Natural killer cell (primary cell): ENCODE measurements at regions of chr11 and their contacts with region 1.

Region 1: GRCh38 chr11:66480117-66480938 is at the start of gene DPP3:
- DNase-seq: peak; percentile 94 to 96
- ATAC-seq: peak; percentile 98 to 99 (median 99)
- H3K4me3 ChIP-seq: peak within 1 kb of the TSS; percentile 89
- H3K4me3 Mint-ChIP-seq: peak within 1 kb of the TSS; percentile 92
- H3K27ac ChIP-seq: peak within 1 kb of the TSS; percentile 82
- H3K27ac Mint-ChIP-seq: peak within 1 kb of the TSS; percentile 87 to 91
- H3K4me1 ChIP-seq: peaks cover 21% of the 10 kb centered on the region
- H3K4me1 Mint-ChIP-seq: peaks cover 13 to 42% of the 10 kb centered on the region in 2 donors
- H3K27me3 ChIP-seq: no peaks in the 10 kb centered on the region
- H3K27me3 Mint-ChIP-seq: no peaks in the 10 kb centered on the region
- CTCF ChIP-seq: no peak
- total RNA-seq, gene DPP3: 37.4 to 42.9 (median 38.6) TPM

Region 2: DNA sequence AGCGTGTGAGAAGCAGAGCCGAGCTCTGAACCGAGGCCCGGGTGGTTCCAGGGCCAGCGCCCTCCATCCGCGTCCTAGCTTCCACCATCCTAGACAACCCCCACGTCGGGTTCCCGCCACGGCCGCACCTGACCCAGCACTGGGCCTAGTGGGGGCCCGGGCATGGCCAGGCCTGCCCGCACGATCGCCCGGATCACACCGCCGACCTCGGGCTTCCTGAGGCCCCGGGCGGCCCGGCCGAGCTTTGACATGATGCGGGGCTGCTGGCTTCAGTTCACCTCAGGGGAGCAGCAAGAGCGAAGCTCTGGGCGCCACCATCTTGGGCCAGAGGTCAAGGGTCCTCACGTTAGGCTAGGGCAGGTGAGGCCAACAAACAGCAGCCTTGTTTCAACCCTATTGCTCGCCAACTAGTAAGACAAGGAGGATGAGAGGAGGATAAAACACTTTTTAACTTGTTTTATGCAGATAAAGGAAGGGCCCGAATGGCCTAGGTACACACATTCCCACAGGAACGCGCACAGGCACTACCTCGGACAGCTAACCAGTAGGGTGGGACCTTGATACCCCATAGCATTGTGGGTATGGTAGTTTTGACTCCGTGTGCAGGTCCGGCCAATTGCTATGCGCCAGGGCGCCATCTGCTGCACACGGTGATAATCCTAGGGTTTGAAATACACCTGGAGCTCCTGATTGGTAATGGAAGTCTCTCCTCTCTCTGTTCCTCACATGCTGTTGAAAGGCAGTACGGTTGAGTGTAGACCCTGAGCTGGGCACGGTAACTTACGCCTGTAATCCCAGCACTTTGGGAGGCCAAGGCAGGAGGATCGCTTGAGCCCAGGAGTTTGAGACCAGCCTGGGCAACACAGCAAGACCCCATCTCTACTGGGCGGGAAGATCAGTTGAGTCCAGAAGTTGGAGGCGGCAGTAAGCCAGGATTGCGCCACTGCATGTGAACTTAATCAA is 41.5 kb before region 1 on chr11 and contains the start of gene MRPL11:
- intact Hi-C with region 1: loop called (anchors 1 kb)
- DNase-seq: peak; percentile 84 to 96
- ATAC-seq: peak; percentile 97 to 100 (median 98)
- H3K4me3 ChIP-seq: peak within 1 kb of the TSS; percentile 64
- H3K4me3 Mint-ChIP-seq: peak within 1 kb of the TSS; percentile 87
- H3K27ac ChIP-seq: peak within 1 kb of the TSS; percentile 89
- H3K27ac Mint-ChIP-seq: peak within 1 kb of the TSS; percentile 89 to 95
- H3K4me1 ChIP-seq: peaks cover 10% of the 10 kb centered on the region
- H3K4me1 Mint-ChIP-seq: peaks cover 16 to 17% of the 10 kb centered on the region in 2 donors
- H3K27me3 ChIP-seq: no peaks in the 10 kb centered on the region
- H3K27me3 Mint-ChIP-seq: peaks cover 0 to 11% of the 10 kb centered on the region in 2 donors
- CTCF ChIP-seq: peak; percentile 75
- total RNA-seq, gene MRPL11: 20.7 to 24.2 (median 23.9) TPM

Region 3: GRCh38 chr11:66466225-66467027 is 13.9 kb before region 1 on chr11 and contains the start of gene PELI3:
- intact Hi-C with region 1: loop called (anchors 2 kb)
- DNase-seq: peak; percentile 90 to 98
- ATAC-seq: peak; percentile 91 to 98 (median 92)
- H3K4me3 ChIP-seq: peak within 1 kb of the TSS; percentile 58
- H3K4me3 Mint-ChIP-seq: peak within 1 kb of the TSS; percentile 94
- H3K27ac ChIP-seq: peak within 1 kb of the TSS; percentile 76
- H3K27ac Mint-ChIP-seq: peak within 1 kb of the TSS; percentile 72 to 93
- H3K4me1 ChIP-seq: peaks cover 20% of the 10 kb centered on the region
- H3K4me1 Mint-ChIP-seq: peaks cover 13 to 21% of the 10 kb centered on the region in 2 donors
- H3K27me3 ChIP-seq: no peaks in the 10 kb centered on the region
- H3K27me3 Mint-ChIP-seq: no peaks in the 10 kb centered on the region
- CTCF ChIP-seq: no peak
- total RNA-seq, gene PELI3: 5.3 to 6.3 (median 5.6) TPM

Region 4: GRCh38 chr11:66548774-66549630 is 68.7 kb after region 1 on chr11:
- intact Hi-C with region 1: no loop called
- DNase-seq: no peak
- ATAC-seq: no peak
- H3K4me3 ChIP-seq: no peak overlapping the region
- H3K4me3 Mint-ChIP-seq: peak overlapping the region; percentile 43
- H3K27ac ChIP-seq: no peak overlapping the region
- H3K27ac Mint-ChIP-seq: no peak overlapping the region
- H3K4me1 ChIP-seq: peaks cover 25% of the 10 kb centered on the region
- H3K4me1 Mint-ChIP-seq: peaks cover 12 to 23% of the 10 kb centered on the region in 2 donors
- H3K27me3 ChIP-seq: no peaks in the 10 kb centered on the region
- H3K27me3 Mint-ChIP-seq: peaks cover 0 to 9% of the 10 kb centered on the region in 2 donors
- CTCF ChIP-seq: no peak

Region 5: GRCh38 chr11:66559142-66559865 is 79.0 kb after region 1 on chr11:
- intact Hi-C with region 1: no loop called
- DNase-seq: peak in 1 of 2 donors; percentile 62
- ATAC-seq: peak in 2 of 3 donors; percentile 87 to 89
- H3K4me3 ChIP-seq: no peak overlapping the region
- H3K4me3 Mint-ChIP-seq: no peak overlapping the region
- H3K27ac ChIP-seq: no peak overlapping the region
- H3K27ac Mint-ChIP-seq: no peak overlapping the region
- H3K4me1 ChIP-seq: peaks cover 8% of the 10 kb centered on the region
- H3K4me1 Mint-ChIP-seq: no peaks in the 10 kb centered on the region
- H3K27me3 ChIP-seq: peaks cover 2% of the 10 kb centered on the region
- H3K27me3 Mint-ChIP-seq: peaks cover 0 to 7% of the 10 kb centered on the region in 2 donors
- CTCF ChIP-seq: no peak